ENCODE measurements at regions of chr11 and their contacts with region 1.

Region 1: GRCh38 chr11:64846998-64847666 is 2.7 kb upstream of the CDC42BPG start:
- DNase-seq: peak; percentile 95
- H3K4me3 Mint-ChIP-seq: no peak overlapping the region
- H3K27ac Mint-ChIP-seq: peak overlapping the region; percentile 58
- H3K4me1 Mint-ChIP-seq: peaks cover 71% of the 10 kb centered on the region
- H3K27me3 Mint-ChIP-seq: peaks cover 4% of the 10 kb centered on the region

Region 2: GRCh38 chr11:64864473-64865285 is 17.5 kb after region 1 on chr11:
- CTCF ChIA-PET with region 1: interaction called, 106 read pairs
- DNase-seq: no peak
- H3K4me3 Mint-ChIP-seq: peak overlapping the region; percentile 56
- H3K27ac Mint-ChIP-seq: peak overlapping the region; percentile 100
- H3K4me1 Mint-ChIP-seq: peaks cover 94% of the 10 kb centered on the region
- H3K27me3 Mint-ChIP-seq: no peaks in the 10 kb centered on the region

Region 3: DNA sequence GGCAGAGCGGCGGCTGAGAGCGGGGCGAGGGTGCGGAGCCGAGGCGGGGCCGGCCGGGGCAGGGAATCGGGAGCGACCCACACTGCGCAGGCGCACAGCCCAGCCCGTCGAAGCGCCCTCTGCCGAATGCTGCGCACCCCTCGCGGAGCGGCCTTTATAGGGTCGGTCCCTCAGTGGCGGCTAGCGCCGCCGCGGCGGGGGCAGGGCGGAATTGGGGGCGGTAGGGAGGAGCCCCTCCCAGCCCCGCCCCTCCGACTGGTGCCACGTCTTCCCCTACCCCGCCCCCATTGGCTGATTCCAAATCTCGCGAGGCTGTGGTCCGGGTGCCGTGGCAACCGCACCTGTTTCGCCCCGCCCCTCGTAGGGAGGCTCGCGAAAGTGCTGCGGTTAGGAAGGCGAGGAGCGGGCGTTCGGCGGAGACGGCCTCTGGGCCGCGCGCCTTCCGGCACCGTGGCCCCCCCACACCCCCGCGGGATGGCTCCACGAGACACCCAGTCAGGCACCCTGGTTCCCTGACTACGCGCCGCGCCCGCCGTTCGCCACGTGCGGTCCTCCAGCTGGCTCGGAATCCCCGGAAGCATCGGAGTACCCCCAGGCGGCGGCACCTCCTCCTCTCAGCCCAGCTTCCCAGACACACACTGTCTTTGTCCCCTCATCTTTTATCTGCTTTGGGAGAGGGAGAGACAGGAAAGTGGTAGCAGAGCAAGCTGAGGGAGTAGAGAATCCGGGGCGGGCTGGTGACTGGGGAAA is 31.5 kb after region 1 on chr11 and contains the start of gene EHD1:
- CTCF ChIA-PET with region 1: interaction called, 592 read pairs
- DNase-seq: peak; percentile 100
- H3K4me3 Mint-ChIP-seq: peak within 1 kb of the TSS; percentile 99
- H3K27ac Mint-ChIP-seq: peak within 1 kb of the TSS; percentile 98
- H3K4me1 Mint-ChIP-seq: peaks cover 61% of the 10 kb centered on the region
- H3K27me3 Mint-ChIP-seq: no peaks in the 10 kb centered on the region

Region 4: GRCh38 chr11:64996710-64997380 is 149.7 kb after region 1 on chr11 and contains the start of gene BATF2:
- CTCF ChIA-PET with region 1: interaction called, 10 read pairs
- DNase-seq: peak; percentile 33
- H3K4me3 Mint-ChIP-seq: no peak within 1 kb of the TSS
- H3K27ac Mint-ChIP-seq: peak within 1 kb of the TSS; percentile 28
- H3K4me1 Mint-ChIP-seq: peaks cover 32% of the 10 kb centered on the region
- H3K27me3 Mint-ChIP-seq: peaks cover 38% of the 10 kb centered on the region

Region 5: GRCh38 chr11:65111744-65112414 is 264.7 kb after region 1 on chr11 and contains the start of gene TM7SF2:
- CTCF ChIA-PET with region 1: interaction called, 21 read pairs
- DNase-seq: peak; percentile 98
- H3K4me3 Mint-ChIP-seq: peak within 1 kb of the TSS; percentile 87
- H3K27ac Mint-ChIP-seq: peak within 1 kb of the TSS; percentile 92
- H3K4me1 Mint-ChIP-seq: peaks cover 53% of the 10 kb centered on the region
- H3K27me3 Mint-ChIP-seq: peaks cover 4% of the 10 kb centered on the region